Psoas muscle (tissue), 8 donors: ENCODE measurements at regions of chr15 and their contacts with region 1.

Region 1: GRCh38 chr15:31317421-31318327 is 9.0 kb upstream of the KLF13 start:
- DNase-seq: no peak
- ATAC-seq: no peak
- H3K4me3 ChIP-seq: no peak overlapping the region
- H3K27ac ChIP-seq: no peak overlapping the region
- H3K4me1 ChIP-seq: no peaks in the 10 kb centered on the region
- H3K27me3 ChIP-seq: peaks cover 0 to 2% (median 0%) of the 10 kb centered on the region in 3 donors
- CTCF ChIP-seq: no peak

Region 2: DNA sequence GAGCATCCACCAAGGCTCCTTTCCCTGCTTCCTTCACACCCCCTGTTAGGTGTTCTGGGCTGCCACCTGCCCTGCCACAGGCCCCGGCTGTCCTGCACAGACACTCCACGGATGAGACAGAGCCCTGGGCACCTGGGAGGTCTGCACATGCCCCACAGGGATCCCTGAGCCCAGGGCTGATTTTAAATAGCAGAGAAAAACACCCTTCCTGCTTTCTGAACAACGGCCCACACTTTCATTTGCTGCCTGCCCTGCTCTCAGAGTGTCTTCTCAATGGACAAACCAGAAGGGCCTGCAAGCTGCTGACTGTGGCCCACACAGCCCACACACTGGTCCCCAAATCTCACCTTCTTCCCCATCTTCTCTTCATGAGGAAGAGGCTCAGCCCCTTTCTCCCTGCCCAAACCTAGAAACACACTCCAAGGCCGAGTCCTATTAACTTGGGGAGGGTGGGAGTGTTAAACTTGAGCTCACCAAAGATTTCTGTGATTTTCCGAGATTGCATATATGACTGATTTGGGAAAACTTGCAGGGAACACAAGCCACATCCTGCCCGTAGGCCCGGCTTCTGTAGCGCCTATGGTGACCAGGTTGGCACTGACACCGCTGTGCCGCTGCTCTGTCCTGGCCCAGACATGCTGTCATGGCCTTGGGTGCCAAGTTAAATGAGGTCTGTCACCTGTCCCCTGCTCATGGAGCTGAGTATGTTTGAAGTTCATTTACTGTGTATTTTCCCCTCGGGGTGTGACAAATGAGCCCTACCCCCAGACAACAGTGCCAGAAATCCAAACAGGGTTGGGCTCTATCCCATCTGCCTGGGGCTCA is 38.2 kb before region 1 on chr15:
- intact Hi-C with region 1: loop called in 1 of 2 experiments (anchors 5 kb)
- DNase-seq: peak in 1 of 2 donors; percentile 47
- ATAC-seq: peak in 3 of 4 donors; percentile 67 to 80 (median 73)
- H3K4me3 ChIP-seq: no peak overlapping the region
- H3K27ac ChIP-seq: no peak overlapping the region
- H3K4me1 ChIP-seq: peaks cover 5% of the 10 kb centered on the region
- H3K27me3 ChIP-seq: no peaks in the 10 kb centered on the region
- CTCF ChIP-seq: no peak